Left colon (tissue), 2 donors: ENCODE measurements at regions of chr3 and their contacts with region 1.

Region 1: GRCh38 chr3:53114011-53114400 is 16.2 kb downstream of the RFT1 start:
- DNase-seq: peak; percentile 73 to 87
- ATAC-seq: peak; percentile 90

Region 2: DNA sequence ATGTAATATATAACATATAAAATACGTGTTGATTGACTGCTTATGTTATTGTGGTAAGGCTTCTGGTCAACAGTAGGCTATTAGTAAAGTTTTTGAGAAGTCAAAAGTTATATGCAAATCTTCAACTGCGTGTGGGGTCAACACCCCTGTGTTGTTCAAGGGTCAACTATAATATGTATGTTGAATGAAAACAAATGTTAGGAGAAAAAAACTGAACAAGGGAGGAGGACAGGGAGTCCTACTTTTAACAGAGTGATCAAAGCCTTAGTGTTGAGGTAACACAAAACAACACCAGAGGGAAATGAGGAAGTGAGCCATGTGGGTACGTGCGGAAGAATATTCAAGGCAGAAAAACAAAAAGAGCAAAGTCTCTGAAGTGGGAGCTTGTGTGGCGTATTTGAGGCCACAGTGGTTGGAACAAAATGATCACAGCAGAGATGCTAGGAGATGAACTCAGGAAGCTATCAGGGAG is 130.6 kb before region 1 on chr3:
- intact Hi-C with region 1: no loop called
- DNase-seq: peak in 1 of 2 donors; percentile 16
- ATAC-seq: peak; percentile 44

Region 3: DNA sequence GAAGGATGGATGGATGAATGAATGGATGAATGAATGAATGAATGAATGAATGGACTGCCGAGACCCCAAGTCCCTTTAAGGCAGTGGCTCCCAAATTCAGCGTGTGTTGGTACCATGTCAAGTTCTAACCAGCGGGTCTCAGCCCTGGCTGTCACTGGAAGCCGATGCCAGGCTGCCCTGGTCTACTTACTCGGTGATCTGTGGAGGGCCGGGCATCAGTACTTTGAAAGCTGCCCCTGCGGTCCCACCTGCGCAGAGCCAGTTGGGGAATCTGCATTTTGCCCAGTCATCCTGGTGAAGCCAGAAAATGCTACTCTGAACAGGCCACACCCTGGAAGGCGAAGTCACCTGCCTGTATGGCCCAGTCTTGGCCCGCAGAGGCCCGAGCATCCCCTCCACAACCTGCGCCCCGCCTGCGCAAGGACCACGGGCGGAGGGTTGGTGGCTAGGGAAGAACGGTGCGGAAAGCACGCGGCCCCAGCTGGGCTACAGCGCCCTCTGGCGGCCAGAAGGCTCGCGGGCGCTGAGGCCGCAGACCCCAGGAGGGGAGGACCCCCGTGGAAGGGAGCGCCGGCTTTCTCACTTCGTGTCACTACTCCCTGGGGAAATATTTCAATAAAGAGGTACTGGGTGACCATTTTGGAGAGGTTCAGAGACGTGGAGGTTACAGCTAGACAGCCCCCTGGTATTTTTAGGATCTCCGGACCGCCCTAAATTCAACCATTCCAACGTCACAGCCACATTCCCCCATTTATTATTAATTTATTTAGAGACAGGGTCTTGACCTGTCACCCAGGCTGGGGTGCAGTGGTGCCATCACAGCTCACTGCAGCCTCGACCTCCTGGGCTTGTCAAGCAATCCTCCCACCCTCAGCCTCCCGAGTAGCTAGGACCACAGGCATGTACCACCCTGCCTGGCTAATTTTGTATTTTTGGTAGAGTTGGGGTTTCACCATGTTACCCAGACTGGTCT is 81.9 kb after region 1 on chr3:
- intact Hi-C with region 1: loop called (anchors 2 to 5 kb)
- DNase-seq: peak in 1 of 2 donors; percentile 68
- ATAC-seq: peak; percentile 68

Region 4: GRCh38 chr3:53278667-53279066 is 164.7 kb after region 1 on chr3:
- intact Hi-C with region 1: no loop called
- DNase-seq: no peak
- ATAC-seq: no peak